ENCODE measurements at regions of chr1 and their contacts with region 1.

Region 1: GRCh38 chr1:181088079-181089016 is at the start of gene IER5:
- DNase-seq: peak; percentile 97 to 99 (median 98)
- H3K4me3 ChIP-seq: peak within 1 kb of the TSS; percentile 76 to 93 (median 91)
- H3K4me3 Mint-ChIP-seq: peak within 1 kb of the TSS; percentile 100
- H3K27ac ChIP-seq: peak within 1 kb of the TSS; percentile 92
- H3K27ac Mint-ChIP-seq: peak within 1 kb of the TSS; percentile 97 to 99 (median 98)
- H3K4me1 ChIP-seq: peaks cover 54 to 68% of the 10 kb centered on the region in 2 donors
- H3K4me1 Mint-ChIP-seq: peaks cover 61% of the 10 kb centered on the region
- H3K27me3 ChIP-seq: no peaks in the 10 kb centered on the region
- H3K27me3 Mint-ChIP-seq: no peaks in the 10 kb centered on the region
- CTCF ChIP-seq: no peak
- polyA plus RNA-seq, gene IER5: 13.7 to 110 (median 29.0) TPM

Region 2: GRCh38 chr1:180791806-180792205 is 296.5 kb before region 1 on chr1:
- intact Hi-C with region 1: no loop called
- DNase-seq: peak; percentile 3 to 37 (median 3)
- H3K4me3 ChIP-seq: no peak overlapping the region
- H3K4me3 Mint-ChIP-seq: no peak overlapping the region
- H3K27ac ChIP-seq: no peak overlapping the region
- H3K27ac Mint-ChIP-seq: no peak overlapping the region
- H3K4me1 ChIP-seq: peaks cover 9 to 14% of the 10 kb centered on the region in 2 donors
- H3K4me1 Mint-ChIP-seq: peaks cover 14% of the 10 kb centered on the region
- H3K27me3 ChIP-seq: no peaks in the 10 kb centered on the region
- H3K27me3 Mint-ChIP-seq: no peaks in the 10 kb centered on the region
- CTCF ChIP-seq: no peak

Region 3: GRCh38 chr1:181033799-181034451 is 54.4 kb before region 1 on chr1 and contains the start of gene MR1:
- intact Hi-C with region 1: loop called in 1 of 2 experiments (anchors 10 kb)
- DNase-seq: peak; percentile 86 to 92 (median 91)
- H3K4me3 ChIP-seq: peak within 1 kb of the TSS; percentile 52 to 100 (median 83)
- H3K4me3 Mint-ChIP-seq: peak within 1 kb of the TSS; percentile 86 to 96
- H3K27ac ChIP-seq: peak within 1 kb of the TSS; percentile 82 to 100
- H3K27ac Mint-ChIP-seq: peak within 1 kb of the TSS; percentile 97 to 100 (median 99)
- H3K4me1 ChIP-seq: peaks cover 46 to 58% of the 10 kb centered on the region in 2 donors
- H3K4me1 Mint-ChIP-seq: peaks cover 54% of the 10 kb centered on the region
- H3K27me3 ChIP-seq: no peaks in the 10 kb centered on the region
- H3K27me3 Mint-ChIP-seq: no peaks in the 10 kb centered on the region
- CTCF ChIP-seq: no peak
- polyA plus RNA-seq, gene MR1: 17.7 to 46.9 (median 40.9) TPM

Region 4: GRCh38 chr1:181062836-181063428 is 25.4 kb before region 1 on chr1:
- intact Hi-C with region 1: loop called in 1 of 2 experiments (anchors 2 kb)
- DNase-seq: peak; percentile 81 to 93 (median 92)
- H3K4me3 ChIP-seq: peak overlapping the region in 1 of 3 experiments; percentile 72
- H3K4me3 Mint-ChIP-seq: peak overlapping the region; percentile 79 to 95
- H3K27ac ChIP-seq: peak overlapping the region; percentile 87 to 99
- H3K27ac Mint-ChIP-seq: peak overlapping the region; percentile 97 to 100 (median 99)
- H3K4me1 ChIP-seq: peaks cover 49 to 50% of the 10 kb centered on the region in 2 donors
- H3K4me1 Mint-ChIP-seq: peaks cover 48% of the 10 kb centered on the region
- H3K27me3 ChIP-seq: no peaks in the 10 kb centered on the region
- H3K27me3 Mint-ChIP-seq: peaks cover 0 to 2% (median 0%) of the 10 kb centered on the region in 3 donors
- CTCF ChIP-seq: no peak

Region 5: GRCh38 chr1:181128592-181129497 is 40.5 kb after region 1 on chr1:
- intact Hi-C with region 1: loop called (anchors 2 kb)
- DNase-seq: peak; percentile 86 to 88 (median 86)
- H3K4me3 ChIP-seq: peak overlapping the region; percentile 11 to 75 (median 35)
- H3K4me3 Mint-ChIP-seq: peak overlapping the region; percentile 84 to 94
- H3K27ac ChIP-seq: peak overlapping the region; percentile 88 to 91
- H3K27ac Mint-ChIP-seq: peak overlapping the region; percentile 94 to 99 (median 98)
- H3K4me1 ChIP-seq: peaks cover 85 to 98% of the 10 kb centered on the region in 2 donors
- H3K4me1 Mint-ChIP-seq: peaks cover 91% of the 10 kb centered on the region
- H3K27me3 ChIP-seq: no peaks in the 10 kb centered on the region
- H3K27me3 Mint-ChIP-seq: peaks cover 0 to 2% (median 1%) of the 10 kb centered on the region in 3 donors
- CTCF ChIP-seq: no peak

Region 6: GRCh38 chr1:181142096-181142958 is 54.0 kb after region 1 on chr1:
- intact Hi-C with region 1: loop called in 1 of 2 experiments (anchors 5 kb)
- DNase-seq: peak; percentile 80 to 85 (median 82)
- H3K4me3 ChIP-seq: peak overlapping the region in 1 of 3 experiments; percentile 45
- H3K4me3 Mint-ChIP-seq: peak overlapping the region; percentile 64 to 65
- H3K27ac ChIP-seq: peak overlapping the region in 1 of 2 donors; percentile 54
- H3K27ac Mint-ChIP-seq: peak overlapping the region; percentile 51 to 91 (median 82)
- H3K4me1 ChIP-seq: peaks cover 39 to 48% of the 10 kb centered on the region in 2 donors
- H3K4me1 Mint-ChIP-seq: peaks cover 59% of the 10 kb centered on the region
- H3K27me3 ChIP-seq: no peaks in the 10 kb centered on the region
- H3K27me3 Mint-ChIP-seq: peaks cover 1 to 6% (median 5%) of the 10 kb centered on the region in 3 donors
- CTCF ChIP-seq: peak; percentile 88

Region 7: GRCh38 chr1:181239086-181239485 is 150.7 kb after region 1 on chr1:
- intact Hi-C with region 1: no loop called
- DNase-seq: no peak
- H3K4me3 ChIP-seq: no peak overlapping the region
- H3K4me3 Mint-ChIP-seq: no peak overlapping the region
- H3K27ac ChIP-seq: no peak overlapping the region
- H3K27ac Mint-ChIP-seq: no peak overlapping the region
- H3K4me1 ChIP-seq: no peaks in the 10 kb centered on the region
- H3K4me1 Mint-ChIP-seq: no peaks in the 10 kb centered on the region
- H3K27me3 ChIP-seq: no peaks in the 10 kb centered on the region
- H3K27me3 Mint-ChIP-seq: peaks cover 4 to 10% (median 5%) of the 10 kb centered on the region in 3 donors
- CTCF ChIP-seq: no peak